ENCODE measurements at regions of chr2 and their contacts with region 1.

Region 1: GRCh38 chr2:202736826-202737225 is 102.1 kb downstream of the FAM117B start:
- DNase-seq: no peak
- ATAC-seq: no peak
- H3K4me3 Mint-ChIP-seq: no peak overlapping the region
- H3K27ac Mint-ChIP-seq: no peak overlapping the region
- H3K4me1 Mint-ChIP-seq: no peaks in the 10 kb centered on the region
- H3K27me3 Mint-ChIP-seq: no peaks in the 10 kb centered on the region
- CTCF ChIP-seq: no peak

Region 2: GRCh38 chr2:201040867-201041628 is 1695.8 kb before region 1 on chr2:
- CTCF ChIA-PET with region 1: no interaction called
- POLR2A ChIA-PET with region 1: interaction called, 16 read pairs
- DNase-seq: no peak
- ATAC-seq: no peak
- H3K4me3 Mint-ChIP-seq: no peak overlapping the region
- H3K27ac Mint-ChIP-seq: no peak overlapping the region
- H3K4me1 Mint-ChIP-seq: no peaks in the 10 kb centered on the region
- H3K27me3 Mint-ChIP-seq: no peaks in the 10 kb centered on the region
- CTCF ChIP-seq: no peak

Region 3: DNA sequence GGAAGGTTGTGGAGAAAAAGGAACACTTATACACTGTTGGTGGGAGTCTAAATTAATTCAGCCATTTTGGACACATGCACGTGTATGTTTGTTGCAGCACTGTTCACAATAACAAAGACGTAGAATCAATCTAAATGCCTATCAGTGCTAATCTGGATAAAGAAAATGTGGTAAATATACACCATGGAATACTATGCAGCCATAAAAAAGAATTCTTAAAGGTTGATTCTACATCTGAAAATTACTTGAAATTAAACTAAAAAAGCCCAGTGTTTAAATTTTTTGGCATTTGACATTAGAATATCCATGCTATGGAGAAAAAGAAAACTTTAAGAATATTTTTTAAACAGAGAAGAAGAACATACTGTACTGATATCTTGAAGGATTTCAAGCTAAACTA is 276.7 kb before region 1 on chr2:
- CTCF ChIA-PET with region 1: no interaction called
- POLR2A ChIA-PET with region 1: no interaction called
- DNase-seq: no peak
- ATAC-seq: no peak
- H3K4me3 Mint-ChIP-seq: no peak overlapping the region
- H3K27ac Mint-ChIP-seq: no peak overlapping the region
- H3K4me1 Mint-ChIP-seq: 0 out of 2 replicates have a peak, but pooled peaks cover 3% of the 10 kb centered on the region
- H3K27me3 Mint-ChIP-seq: no peaks in the 10 kb centered on the region
- CTCF ChIP-seq: no peak

Region 4: GRCh38 chr2:202808754-202809153 is 71.9 kb after region 1 on chr2:
- CTCF ChIA-PET with region 1: no interaction called
- POLR2A ChIA-PET with region 1: no interaction called
- DNase-seq: no peak
- ATAC-seq: no peak
- H3K4me3 Mint-ChIP-seq: no peak overlapping the region
- H3K27ac Mint-ChIP-seq: no peak overlapping the region
- H3K4me1 Mint-ChIP-seq: peaks cover 10% of the 10 kb centered on the region
- H3K27me3 Mint-ChIP-seq: peaks cover 3% of the 10 kb centered on the region; the same call in 1 of the 2 replicates
- CTCF ChIP-seq: no peak

Measured in WTC11 (cell line).